ENCODE measurements at regions of chr17 and their contacts with region 1.

Region 1: DNA sequence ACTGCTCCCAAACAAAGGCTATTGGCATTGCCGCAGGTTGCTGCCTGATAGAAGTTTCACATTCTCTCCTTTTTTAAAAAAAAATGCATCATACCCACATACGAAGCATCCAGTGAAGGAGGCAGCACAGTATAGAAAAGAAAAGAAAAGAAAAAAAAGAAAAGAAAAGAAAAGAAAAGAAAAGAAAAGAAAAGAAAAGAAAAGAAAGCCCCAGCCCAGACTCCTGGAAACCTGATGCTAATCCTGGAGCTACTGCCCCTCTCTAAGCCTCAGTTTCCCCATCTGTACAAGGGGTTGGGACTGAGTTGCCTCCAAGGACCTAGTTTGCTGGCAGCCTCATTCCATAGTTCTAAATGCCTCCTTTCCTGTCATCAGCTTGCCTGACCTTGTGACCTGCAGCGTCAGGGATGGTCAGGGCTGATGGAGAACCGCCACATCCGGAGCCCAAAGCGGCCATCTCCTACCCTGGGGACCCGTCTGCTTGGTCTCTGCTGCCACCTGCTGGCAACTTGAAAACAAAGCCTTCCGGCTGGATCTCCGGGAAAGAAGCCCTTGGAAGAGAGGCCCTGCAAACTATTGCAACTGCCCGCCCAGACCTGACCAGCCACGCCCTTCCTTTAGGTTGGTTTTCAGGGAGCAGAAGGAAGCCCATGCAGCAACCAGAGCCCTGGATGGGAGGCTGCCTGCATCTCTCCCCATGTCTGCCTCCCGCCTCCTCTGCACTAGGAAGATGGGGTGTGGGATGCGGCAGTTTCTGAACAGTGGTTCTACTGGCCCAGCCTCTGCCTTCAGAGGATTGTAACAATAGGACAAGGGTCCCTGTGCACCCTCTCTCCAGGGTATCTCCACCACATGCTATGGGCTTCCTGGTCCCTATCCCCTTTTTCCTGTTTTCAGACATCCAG is 13.0 kb downstream of the AIPL1 start:
- DNase-seq: peak; percentile 91
- H3K4me3 Mint-ChIP-seq: no peak overlapping the region
- H3K27ac Mint-ChIP-seq: no peak overlapping the region
- H3K4me1 Mint-ChIP-seq: peaks cover 3% of the 10 kb centered on the region
- H3K27me3 Mint-ChIP-seq: peaks cover 48% of the 10 kb centered on the region

Region 2: GRCh38 chr17:5706577-5707216 is 715.3 kb before region 1 on chr17:
- intact Hi-C with region 1: loop called (anchors 5 kb)
- DNase-seq: peak; percentile 83
- H3K4me3 Mint-ChIP-seq: no peak overlapping the region
- H3K27ac Mint-ChIP-seq: no peak overlapping the region
- H3K4me1 Mint-ChIP-seq: no peaks in the 10 kb centered on the region
- H3K27me3 Mint-ChIP-seq: peaks cover 9% of the 10 kb centered on the region